PC-9 (cell line): ENCODE measurements at regions of chr20 and their contacts with region 1.

Region 1: DNA sequence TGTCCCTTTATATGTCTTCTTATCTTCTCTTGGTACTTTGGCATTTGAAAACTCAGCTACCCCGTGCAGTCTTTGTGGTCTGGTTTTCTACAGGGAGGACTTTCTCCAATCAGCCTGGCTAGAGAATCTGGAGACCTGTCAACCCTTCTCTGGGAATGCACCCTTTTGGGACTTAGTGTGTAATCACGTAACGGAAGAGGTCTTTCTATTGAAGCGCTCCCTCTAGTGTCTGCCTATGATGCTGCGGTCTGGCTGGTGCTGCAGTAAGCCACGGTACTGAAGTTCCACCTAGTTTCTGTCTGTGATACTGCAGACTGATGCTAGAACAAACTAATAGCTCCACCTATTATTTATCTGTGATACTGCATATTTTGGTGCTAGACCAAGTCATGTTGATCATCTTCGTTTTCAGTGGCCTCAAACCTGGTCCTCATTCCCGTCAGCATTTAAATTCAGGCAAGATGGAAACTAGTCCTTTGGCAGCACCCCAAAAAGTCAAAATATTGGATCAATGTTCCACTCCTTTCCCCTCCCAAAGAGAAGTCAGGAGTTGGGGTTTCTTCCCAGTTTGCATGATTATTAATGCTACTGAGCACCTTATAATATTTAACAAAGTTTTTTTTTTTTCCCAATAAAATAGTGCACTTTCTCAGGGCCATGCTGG is 12.5 kb upstream of the SIRPB2 start:
- DNase-seq: peak; percentile 87
- H3K4me3 ChIP-seq: no peak overlapping the region
- H3K27ac ChIP-seq: peak overlapping the region; percentile 73; the same call in 1 of the 2 replicates
- H3K4me1 ChIP-seq: peaks cover 47% of the 10 kb centered on the region
- H3K27me3 ChIP-seq: no peaks in the 10 kb centered on the region
- CTCF ChIP-seq: peak; percentile 96

Region 2: GRCh38 chr20:1313236-1313964 is 190.3 kb before region 1 on chr20:
- CTCF ChIA-PET with region 1: no interaction called
- POLR2A ChIA-PET with region 1: no interaction called
- intact Hi-C with region 1: loop called (anchors 2 kb)
- DNase-seq: peak in 1 of 2 experiments; percentile 60
- H3K4me3 ChIP-seq: no peak overlapping the region
- H3K27ac ChIP-seq: no peak overlapping the region
- H3K4me1 ChIP-seq: no peaks in the 10 kb centered on the region
- H3K27me3 ChIP-seq: no peaks in the 10 kb centered on the region
- CTCF ChIP-seq: peak; percentile 96

Region 3: GRCh38 chr20:1450926-1451491 is 52.7 kb before region 1 on chr20:
- CTCF ChIA-PET with region 1: interaction called, 10 read pairs
- POLR2A ChIA-PET with region 1: no interaction called
- intact Hi-C with region 1: no loop called
- DNase-seq: no peak
- H3K4me3 ChIP-seq: no peak overlapping the region
- H3K27ac ChIP-seq: no peak overlapping the region
- H3K4me1 ChIP-seq: no peaks in the 10 kb centered on the region
- H3K27me3 ChIP-seq: no peaks in the 10 kb centered on the region
- CTCF ChIP-seq: no peak

Region 4: GRCh38 chr20:1474825-1475603 is 28.7 kb before region 1 on chr20:
- CTCF ChIA-PET with region 1: interaction called, 40 read pairs
- POLR2A ChIA-PET with region 1: interaction called, 3 read pairs
- intact Hi-C with region 1: loop called (anchors 1 kb)
- DNase-seq: peak; percentile 65 to 81
- H3K4me3 ChIP-seq: peak overlapping the region; percentile 54; the same call in 1 of the 2 replicates
- H3K27ac ChIP-seq: peak overlapping the region; percentile 92
- H3K4me1 ChIP-seq: peaks cover 73% of the 10 kb centered on the region
- H3K27me3 ChIP-seq: no peaks in the 10 kb centered on the region
- CTCF ChIP-seq: peak; percentile 69

Region 5: GRCh38 chr20:1567392-1568162 is 63.9 kb after region 1 on chr20:
- CTCF ChIA-PET with region 1: interaction called, 6 read pairs
- POLR2A ChIA-PET with region 1: interaction called, 4 read pairs
- intact Hi-C with region 1: loop called (anchors 1 kb)
- DNase-seq: peak; percentile 76 to 97
- H3K4me3 ChIP-seq: no peak overlapping the region
- H3K27ac ChIP-seq: peak overlapping the region; percentile 99
- H3K4me1 ChIP-seq: peaks cover 67% of the 10 kb centered on the region
- H3K27me3 ChIP-seq: no peaks in the 10 kb centered on the region
- CTCF ChIP-seq: no peak

Region 6: GRCh38 chr20:1734269-1734858 is 230.7 kb after region 1 on chr20:
- CTCF ChIA-PET with region 1: interaction called, 10 read pairs
- POLR2A ChIA-PET with region 1: no interaction called
- intact Hi-C with region 1: loop called (anchors 1 kb)
- DNase-seq: no peak
- H3K4me3 ChIP-seq: no peak overlapping the region
- H3K27ac ChIP-seq: peak overlapping the region; percentile 91
- H3K4me1 ChIP-seq: peaks cover 50% of the 10 kb centered on the region
- H3K27me3 ChIP-seq: no peaks in the 10 kb centered on the region
- CTCF ChIP-seq: no peak